ENCODE measurements at regions of chr17 and their contacts with region 1.

Region 1: GRCh38 chr17:76557368-76558197 is 17.7 kb downstream of the PRCD start:
- DNase-seq: peak; percentile 97
- ATAC-seq: peak; percentile 87
- H3K4me3 Mint-ChIP-seq: peak overlapping the region; percentile 100
- H3K27ac Mint-ChIP-seq: peak overlapping the region; percentile 99
- H3K4me1 Mint-ChIP-seq: peaks cover 50% of the 10 kb centered on the region
- H3K27me3 Mint-ChIP-seq: no peaks in the 10 kb centered on the region

Region 2: GRCh38 chr17:75978938-75979704 is 578.5 kb before region 1 on chr17 and contains the starts of genes ACOX1 and TEN1:
- CTCF ChIA-PET with region 1: interaction called, 3 read pairs
- POLR2A ChIA-PET with region 1: no interaction called
- intact Hi-C with region 1: loop called in 1 of 2 experiments (anchors 1 kb)
- DNase-seq: peak; percentile 98
- ATAC-seq: peak; percentile 96
- H3K4me3 Mint-ChIP-seq: peak within 1 kb of the TSS; percentile 89
- H3K27ac Mint-ChIP-seq: peak within 1 kb of the TSS; percentile 94
- H3K4me1 Mint-ChIP-seq: peaks cover 30% of the 10 kb centered on the region
- H3K27me3 Mint-ChIP-seq: no peaks in the 10 kb centered on the region
- total RNA-seq, gene ACOX1: 27.7 to 33.1 TPM
- total RNA-seq, gene TEN1: 9.8 to 13.6 TPM

Region 3: DNA sequence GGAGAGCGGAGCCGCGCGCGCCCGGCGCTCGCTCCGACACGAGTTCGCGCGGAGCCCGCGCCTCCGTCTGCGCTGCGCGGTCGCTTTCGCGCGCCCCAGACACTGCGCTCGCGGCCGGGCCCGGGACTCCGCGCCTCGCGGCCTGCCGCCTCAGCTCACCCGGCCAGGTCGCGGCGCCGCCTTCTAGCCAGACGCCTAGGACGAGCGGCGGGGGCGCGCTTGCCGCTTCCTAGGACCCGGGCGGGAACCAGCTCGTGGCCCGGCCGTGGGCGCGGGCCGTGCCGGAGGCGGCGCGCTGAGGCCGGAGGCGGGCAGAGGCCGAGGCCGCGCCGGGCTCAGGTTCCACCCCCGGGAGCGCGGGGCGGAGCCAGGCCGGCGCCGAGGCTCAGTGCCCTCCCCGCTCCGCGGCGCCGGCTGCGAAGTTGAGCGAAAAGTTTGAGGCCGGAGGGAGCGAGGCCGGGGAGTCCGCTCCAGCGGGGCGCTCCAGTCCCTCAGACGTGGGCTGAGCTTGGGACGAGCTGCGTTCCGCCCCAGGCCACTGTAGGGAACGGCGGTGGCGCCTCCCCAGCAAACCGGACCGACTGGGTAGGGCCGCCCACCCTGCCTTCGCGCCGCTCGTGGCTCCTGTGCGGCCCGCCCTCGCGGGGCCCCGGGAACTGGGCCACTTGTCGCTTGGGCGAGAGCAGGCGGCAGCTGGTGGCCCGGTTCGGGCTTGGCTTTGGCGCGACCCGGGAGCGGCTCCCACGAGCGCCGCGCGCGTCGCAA is 173.2 kb before region 1 on chr17 and contains the start of gene SPHK1:
- CTCF ChIA-PET with region 1: no interaction called
- POLR2A ChIA-PET with region 1: interaction called, 5 read pairs
- intact Hi-C with region 1: loop called in 1 of 2 experiments (anchors 1 kb)
- DNase-seq: peak; percentile 86
- ATAC-seq: peak; percentile 72
- H3K4me3 Mint-ChIP-seq: peak within 1 kb of the TSS; percentile 85
- H3K27ac Mint-ChIP-seq: peak within 1 kb of the TSS; percentile 81
- H3K4me1 Mint-ChIP-seq: peaks cover 12% of the 10 kb centered on the region
- H3K27me3 Mint-ChIP-seq: no peaks in the 10 kb centered on the region
- total RNA-seq, gene SPHK1: 7.4 to 11.7 TPM

Region 4: GRCh38 chr17:76515274-76515949 is 42.2 kb before region 1 on chr17:
- CTCF ChIA-PET with region 1: interaction called, 9 read pairs
- POLR2A ChIA-PET with region 1: interaction called, 5 read pairs
- intact Hi-C with region 1: loop called (anchors 1 to 2 kb)
- DNase-seq: peak; percentile 86
- ATAC-seq: peak; percentile 90
- H3K4me3 Mint-ChIP-seq: peak overlapping the region; percentile 47
- H3K27ac Mint-ChIP-seq: peak overlapping the region; percentile 94
- H3K4me1 Mint-ChIP-seq: peaks cover 32% of the 10 kb centered on the region
- H3K27me3 Mint-ChIP-seq: no peaks in the 10 kb centered on the region

Region 5: GRCh38 chr17:76567634-76568432 is 10.2 kb after region 1 on chr17:
- CTCF ChIA-PET with region 1: interaction called, 5 read pairs
- POLR2A ChIA-PET with region 1: interaction called, 14 read pairs
- intact Hi-C with region 1: no loop called
- DNase-seq: no peak
- ATAC-seq: peak; percentile 4
- H3K4me3 Mint-ChIP-seq: no peak overlapping the region
- H3K27ac Mint-ChIP-seq: no peak overlapping the region
- H3K4me1 Mint-ChIP-seq: peaks cover 18% of the 10 kb centered on the region
- H3K27me3 Mint-ChIP-seq: no peaks in the 10 kb centered on the region

Region 6: DNA sequence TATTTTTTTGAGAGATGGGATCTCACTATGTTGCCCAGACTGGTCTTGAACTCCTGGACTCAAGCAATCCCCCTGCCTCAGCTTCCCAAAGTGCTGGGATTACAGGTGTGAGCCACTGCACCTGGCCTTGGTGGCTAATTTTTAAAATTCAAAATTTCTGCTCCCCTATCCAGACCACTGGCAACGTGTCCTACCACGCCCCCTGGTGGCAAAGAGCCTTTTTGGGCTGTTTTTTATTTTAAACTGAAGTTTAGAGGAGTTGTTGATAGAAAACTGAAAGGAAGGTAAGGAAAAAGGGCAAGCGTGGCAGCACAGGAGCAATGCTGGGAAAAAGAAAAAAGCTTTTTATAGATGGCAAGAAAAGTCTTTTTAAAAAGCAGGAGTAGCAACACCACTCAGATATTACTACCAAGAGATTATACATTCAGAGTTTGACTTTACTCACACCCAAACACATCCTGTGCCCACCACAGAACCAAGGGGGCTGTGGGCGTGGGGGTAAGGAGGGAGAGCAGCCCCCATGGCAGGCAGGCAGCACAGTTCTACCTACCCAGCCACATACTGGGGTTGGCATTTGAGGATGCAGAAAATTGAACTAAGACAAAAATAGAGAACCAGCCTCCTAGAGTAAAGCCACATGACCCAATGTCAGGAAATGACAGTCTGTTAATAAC is 157.4 kb after region 1 on chr17:
- CTCF ChIA-PET with region 1: interaction called, 4 read pairs
- POLR2A ChIA-PET with region 1: no interaction called
- intact Hi-C with region 1: loop called in 1 of 2 experiments (anchors 5 kb)
- DNase-seq: peak; percentile 87
- ATAC-seq: no peak
- H3K4me3 Mint-ChIP-seq: no peak overlapping the region
- H3K27ac Mint-ChIP-seq: peak overlapping the region; percentile 68
- H3K4me1 Mint-ChIP-seq: peaks cover 38% of the 10 kb centered on the region
- H3K27me3 Mint-ChIP-seq: no peaks in the 10 kb centered on the region

Region 7: DNA sequence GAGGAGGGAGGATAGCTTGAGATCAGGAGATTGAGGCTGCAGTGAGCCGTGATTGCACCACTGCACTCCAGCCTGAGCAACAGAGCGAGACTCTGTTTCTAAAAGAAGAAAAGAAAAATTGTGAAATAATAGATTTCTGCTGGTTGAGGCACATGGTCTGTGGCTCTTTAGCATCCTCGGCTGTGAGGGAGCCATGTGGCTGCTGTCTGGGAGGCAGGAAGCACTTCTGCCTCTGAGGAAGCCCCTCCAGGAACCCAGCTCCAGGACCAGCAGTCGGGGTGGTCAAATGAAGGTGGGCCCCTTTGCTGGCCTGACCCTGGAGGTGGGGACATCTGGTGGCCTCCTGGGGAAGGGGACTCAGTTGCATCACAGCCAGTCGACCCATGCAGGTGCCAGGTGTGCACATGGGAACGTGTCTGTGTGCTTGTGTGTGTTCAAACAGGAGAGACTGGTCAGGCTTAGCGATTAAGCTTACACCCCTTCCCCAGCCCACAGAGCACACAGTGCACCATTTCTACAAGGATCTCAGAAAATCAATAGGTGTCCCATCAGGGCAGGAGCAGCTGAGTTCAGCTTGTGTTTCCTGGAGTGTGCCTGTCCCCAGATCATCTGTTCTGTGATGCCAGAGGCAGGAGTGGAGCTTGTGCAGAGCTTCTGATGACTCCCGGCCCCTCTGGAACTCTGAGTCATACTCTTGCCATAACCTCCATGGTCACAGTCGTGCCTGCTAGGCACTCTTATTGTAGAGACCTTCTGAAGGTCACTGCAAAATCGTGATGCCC is 286.3 kb after region 1 on chr17:
- CTCF ChIA-PET with region 1: no interaction called
- POLR2A ChIA-PET with region 1: no interaction called
- intact Hi-C with region 1: no loop called
- DNase-seq: no peak
- ATAC-seq: no peak
- H3K4me3 Mint-ChIP-seq: no peak overlapping the region
- H3K27ac Mint-ChIP-seq: no peak overlapping the region
- H3K4me1 Mint-ChIP-seq: peaks cover 8% of the 10 kb centered on the region
- H3K27me3 Mint-ChIP-seq: peaks cover 44% of the 10 kb centered on the region

Measured in activated CD4-positive, alpha-beta T cell treated with anti-CD3 and anti-CD28 coated beads for 36 hours (primary cell).